MCF 10A (cell line): ENCODE measurements at regions of chr2 and their contacts with region 1.

Region 1: DNA sequence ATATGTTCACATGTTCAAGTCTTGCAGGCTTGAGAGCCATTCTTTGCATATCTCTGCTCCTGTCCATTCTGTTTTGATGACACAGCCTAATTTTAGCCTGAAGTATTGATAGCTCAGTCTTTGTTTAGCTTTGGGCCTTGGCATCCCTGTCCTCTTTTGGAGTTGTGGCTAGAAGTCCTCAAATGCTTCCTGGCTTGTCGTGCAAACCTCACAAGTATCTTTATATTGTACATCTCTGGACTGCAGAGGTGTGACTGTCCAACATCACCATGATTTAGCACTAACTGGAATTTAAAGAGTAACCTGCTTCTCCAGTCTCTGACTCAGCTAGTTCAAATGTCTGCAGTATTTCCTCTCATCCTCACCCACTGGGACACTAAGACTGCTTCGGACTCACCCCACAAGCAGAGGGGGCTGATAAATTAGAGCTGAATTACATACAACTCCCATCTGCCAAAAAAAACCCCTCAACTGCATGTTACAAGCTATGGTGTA is 11.7 kb downstream of the PFN4 start:
- DNase-seq: no peak
- H3K4me3 Mint-ChIP-seq: no peak overlapping the region
- H3K27ac Mint-ChIP-seq: no peak overlapping the region
- H3K4me1 Mint-ChIP-seq: peaks cover 21% of the 10 kb centered on the region
- H3K27me3 Mint-ChIP-seq: no peaks in the 10 kb centered on the region
- CTCF ChIP-seq: no peak

Region 2: DNA sequence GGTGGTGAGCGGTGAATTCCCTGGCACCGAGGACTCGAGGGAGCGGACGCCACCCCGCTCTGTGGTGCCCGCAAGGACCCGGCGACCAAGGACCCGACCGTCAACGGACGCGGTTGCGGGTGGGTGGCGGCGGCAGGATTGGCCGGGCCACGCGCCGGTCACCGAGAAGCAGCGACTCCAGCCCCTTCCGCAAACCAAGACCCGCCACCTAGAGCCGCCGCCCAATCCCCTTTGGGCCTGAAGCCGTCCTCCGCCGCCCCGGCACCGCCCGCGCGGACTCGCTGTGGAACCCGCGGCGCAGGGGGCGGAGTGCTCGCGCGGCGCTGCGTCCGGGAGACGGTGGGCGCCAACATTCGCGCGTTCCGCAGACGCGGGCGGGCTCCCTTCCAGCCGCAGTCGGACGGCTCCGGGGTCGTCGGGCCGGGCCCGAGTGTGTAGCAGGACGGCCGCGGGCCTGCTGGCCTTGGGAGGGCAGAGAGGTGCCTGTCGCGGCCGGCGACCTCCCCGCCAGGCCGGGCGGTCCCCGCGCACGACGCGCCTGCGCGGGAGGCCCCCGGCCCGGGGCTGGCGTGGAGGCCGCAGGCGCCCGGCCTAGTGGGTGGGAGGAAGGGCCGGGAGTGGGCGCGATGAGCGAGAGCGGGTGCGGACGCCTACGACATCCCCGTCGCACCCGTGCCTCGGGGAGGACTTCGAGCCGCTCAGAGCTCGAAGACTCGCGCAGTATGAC is 11.9 kb after region 1 on chr2 and contains the starts of genes FAM228B and PFN4:
- CTCF ChIA-PET with region 1: interaction called, 4 read pairs
- POLR2A ChIA-PET with region 1: interaction called, 15 read pairs
- intact Hi-C with region 1: no loop called
- DNase-seq: peak; percentile 77
- H3K4me3 Mint-ChIP-seq: peak within 1 kb of the TSS; percentile 79
- H3K27ac Mint-ChIP-seq: peak within 1 kb of the TSS; percentile 81
- H3K4me1 Mint-ChIP-seq: peaks cover 16% of the 10 kb centered on the region
- H3K27me3 Mint-ChIP-seq: no peaks in the 10 kb centered on the region
- CTCF ChIP-seq: no peak
- total RNA-seq, gene FAM228B: 10.6 and 19.5 TPM in 2 replicates
- total RNA-seq, gene PFN4: 1.8 and 2.6 TPM in 2 replicates

Region 3: GRCh38 chr2:24220554-24221291 is 109.3 kb after region 1 on chr2:
- CTCF ChIA-PET with region 1: no interaction called
- POLR2A ChIA-PET with region 1: no interaction called
- intact Hi-C with region 1: no loop called
- DNase-seq: no peak
- H3K4me3 Mint-ChIP-seq: no peak overlapping the region
- H3K27ac Mint-ChIP-seq: no peak overlapping the region
- H3K4me1 Mint-ChIP-seq: no peaks in the 10 kb centered on the region
- H3K27me3 Mint-ChIP-seq: no peaks in the 10 kb centered on the region
- CTCF ChIP-seq: no peak